ENCODE measurements at regions of chr22 and their contacts with region 1.

Region 1: GRCh38 chr22:31977141-31977841 is 33.0 kb downstream of the YWHAH start:
- DNase-seq: peak; percentile 54
- ATAC-seq: peak; percentile 95
- H3K4me3 ChIP-seq: no peak overlapping the region
- H3K27ac ChIP-seq: no peak overlapping the region
- H3K4me1 ChIP-seq: no peaks in the 10 kb centered on the region
- H3K27me3 ChIP-seq: peaks cover 2% of the 10 kb centered on the region; the same call in 1 of the 2 replicates
- CTCF ChIP-seq: peak; percentile 78
- POLR2A ChIP-seq: 0 out of 2 replicates have a peak, but pooled peaks have one; percentile 38
- RAD21 ChIP-seq: peak; percentile 88

Region 2: GRCh38 chr22:32066820-32067219 is 89.5 kb after region 1 on chr22:
- CTCF ChIA-PET with region 1: no interaction called
- POLR2A ChIA-PET with region 1: no interaction called
- dilution Hi-C with region 1: no loop called
- in situ Hi-C with region 1: no loop called
- intact Hi-C with region 1: no loop called
- DNase-seq: no peak
- ATAC-seq: no peak
- H3K4me3 ChIP-seq: no peak overlapping the region
- H3K27ac ChIP-seq: no peak overlapping the region
- H3K4me1 ChIP-seq: no peaks in the 10 kb centered on the region
- H3K27me3 ChIP-seq: peaks cover 13% of the 10 kb centered on the region
- CTCF ChIP-seq: no peak
- POLR2A ChIP-seq: no peak
- RAD21 ChIP-seq: no peak

Region 3: GRCh38 chr22:32080904-32081303 is 103.6 kb after region 1 on chr22:
- CTCF ChIA-PET with region 1: no interaction called
- POLR2A ChIA-PET with region 1: no interaction called
- dilution Hi-C with region 1: no loop called
- in situ Hi-C with region 1: loop called (anchors 5 kb)
- intact Hi-C with region 1: loop called (anchors 1 kb)
- DNase-seq: peak; percentile 47
- ATAC-seq: peak; percentile 79
- H3K4me3 ChIP-seq: no peak overlapping the region
- H3K27ac ChIP-seq: no peak overlapping the region
- H3K4me1 ChIP-seq: no peaks in the 10 kb centered on the region
- H3K27me3 ChIP-seq: peaks cover 17% of the 10 kb centered on the region
- CTCF ChIP-seq: peak; percentile 56
- POLR2A ChIP-seq: no peak
- RAD21 ChIP-seq: peak; percentile 71

Region 4: GRCh38 chr22:32265882-32266767 is 288.8 kb after region 1 on chr22:
- CTCF ChIA-PET with region 1: no interaction called
- POLR2A ChIA-PET with region 1: no interaction called
- dilution Hi-C with region 1: no loop called
- in situ Hi-C with region 1: loop called (anchors 5 kb)
- intact Hi-C with region 1: loop called (anchors 1 kb)
- DNase-seq: peak; percentile 67
- ATAC-seq: peak; percentile 85
- H3K4me3 ChIP-seq: no peak overlapping the region
- H3K27ac ChIP-seq: no peak overlapping the region
- H3K4me1 ChIP-seq: no peaks in the 10 kb centered on the region
- H3K27me3 ChIP-seq: no peaks in the 10 kb centered on the region; the same call in 1 of the 2 replicates
- CTCF ChIP-seq: peak; percentile 87
- POLR2A ChIP-seq: no peak
- RAD21 ChIP-seq: peak; percentile 56

Region 5: GRCh38 chr22:32389685-32390084 is 412.4 kb after region 1 on chr22:
- CTCF ChIA-PET with region 1: no interaction called
- POLR2A ChIA-PET with region 1: no interaction called
- dilution Hi-C with region 1: no loop called
- in situ Hi-C with region 1: no loop called
- intact Hi-C with region 1: loop called (anchors 5 kb)
- DNase-seq: peak; percentile 11
- ATAC-seq: no peak
- H3K4me3 ChIP-seq: no peak overlapping the region
- H3K27ac ChIP-seq: no peak overlapping the region
- H3K4me1 ChIP-seq: no peaks in the 10 kb centered on the region
- H3K27me3 ChIP-seq: no peaks in the 10 kb centered on the region
- CTCF ChIP-seq: peak; percentile 39
- POLR2A ChIP-seq: no peak
- RAD21 ChIP-seq: peak; percentile 14; the same call in 1 of the 2 replicates